Breast epithelium (tissue), 4 donors: ENCODE measurements at regions of chr11 and their contacts with region 1.

Region 1: GRCh38 chr11:83572521-83572920 is 286.4 kb upstream of the CCDC90B start:
- DNase-seq: no peak
- H3K4me3 ChIP-seq: no peak overlapping the region
- H3K27ac ChIP-seq: no peak overlapping the region
- H3K4me1 ChIP-seq: no peaks in the 10 kb centered on the region
- H3K27me3 ChIP-seq: no peaks in the 10 kb centered on the region
- CTCF ChIP-seq: no peak
- POLR2A ChIP-seq: no peak

Region 2: DNA sequence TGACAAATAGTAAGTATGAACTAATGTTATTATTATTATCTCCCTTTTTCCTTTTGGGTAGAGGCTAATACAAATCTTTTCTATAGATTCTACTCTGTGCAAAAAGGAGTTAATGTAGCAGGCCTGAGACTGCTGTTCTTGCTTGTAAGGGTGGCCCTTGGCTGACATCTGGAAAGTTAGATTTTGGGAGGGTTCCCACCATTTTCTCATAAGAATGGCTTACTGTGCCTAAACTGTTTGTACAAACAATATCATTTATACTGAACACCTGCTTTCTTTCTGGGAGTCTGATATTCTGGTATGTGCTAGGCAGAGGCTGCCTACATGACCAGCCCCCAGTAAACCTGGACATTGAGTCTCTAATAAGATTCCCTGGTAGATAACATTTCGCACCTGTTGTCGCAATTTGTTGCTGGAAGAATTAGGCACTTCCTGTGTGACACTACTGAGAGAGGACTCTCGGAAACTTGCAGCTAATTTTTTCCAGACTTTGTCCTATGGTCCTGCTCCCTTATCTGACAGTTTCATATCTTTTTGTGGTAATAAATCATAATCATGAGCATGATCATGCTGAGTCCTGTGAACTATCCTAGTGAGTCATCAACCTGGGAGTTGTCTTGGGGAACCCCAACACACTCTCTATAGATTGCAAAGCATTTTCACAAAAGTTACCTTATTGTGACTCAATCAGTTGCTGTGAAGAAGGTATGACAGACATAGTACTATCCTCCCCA is 28.6 kb before region 1 on chr11:
- intact Hi-C with region 1: no loop called
- DNase-seq: no peak
- H3K4me3 ChIP-seq: no peak overlapping the region
- H3K27ac ChIP-seq: no peak overlapping the region
- H3K4me1 ChIP-seq: no peaks in the 10 kb centered on the region
- H3K27me3 ChIP-seq: no peaks in the 10 kb centered on the region
- CTCF ChIP-seq: no peak
- POLR2A ChIP-seq: no peak

Region 3: DNA sequence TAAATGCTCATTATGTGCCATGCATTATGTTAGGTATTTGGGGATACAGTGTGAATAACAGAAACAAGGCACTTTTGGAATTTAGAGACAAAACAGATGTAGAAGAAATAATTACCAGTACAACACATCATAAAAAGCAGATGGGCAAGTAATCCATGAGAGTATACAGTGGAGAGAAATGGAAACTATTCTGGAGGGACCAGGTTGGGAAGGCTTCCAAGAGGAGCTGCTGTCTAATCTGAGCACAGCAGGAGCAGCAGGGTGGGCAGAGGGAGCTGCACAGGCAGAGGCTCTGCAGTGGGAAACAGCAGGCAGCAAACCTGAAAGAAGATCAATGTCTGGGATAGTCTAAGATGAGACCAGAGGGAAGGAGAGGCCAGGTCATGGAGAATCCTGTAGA is 17.6 kb before region 1 on chr11:
- intact Hi-C with region 1: loop called (anchors 1 kb)
- DNase-seq: no peak
- H3K4me3 ChIP-seq: no peak overlapping the region
- H3K27ac ChIP-seq: no peak overlapping the region
- H3K4me1 ChIP-seq: no peaks in the 10 kb centered on the region
- H3K27me3 ChIP-seq: no peaks in the 10 kb centered on the region
- CTCF ChIP-seq: no peak
- POLR2A ChIP-seq: no peak

Region 4: GRCh38 chr11:83628622-83629355 is 56.3 kb after region 1 on chr11:
- intact Hi-C with region 1: no loop called
- DNase-seq: no peak
- H3K4me3 ChIP-seq: no peak overlapping the region
- H3K27ac ChIP-seq: no peak overlapping the region
- H3K4me1 ChIP-seq: no peaks in the 10 kb centered on the region
- H3K27me3 ChIP-seq: no peaks in the 10 kb centered on the region
- CTCF ChIP-seq: no peak
- POLR2A ChIP-seq: no peak

Region 5: GRCh38 chr11:84714316-84714780 is 1141.8 kb after region 1 on chr11:
- intact Hi-C with region 1: no loop called
- DNase-seq: no peak
- H3K4me3 ChIP-seq: no peak overlapping the region
- H3K27ac ChIP-seq: no peak overlapping the region
- H3K4me1 ChIP-seq: no peaks in the 10 kb centered on the region
- H3K27me3 ChIP-seq: no peaks in the 10 kb centered on the region
- CTCF ChIP-seq: peak in 1 of 3 donors; percentile 15
- POLR2A ChIP-seq: no peak